ENCODE measurements at regions of chr1 and their contacts with region 1.

Region 1: GRCh38 chr1:37676281-37677243 is 15.8 kb upstream of the CDCA8 start:
- DNase-seq: peak; percentile 17
- H3K4me3 ChIP-seq: no peak overlapping the region
- H3K27ac ChIP-seq: peak overlapping the region in 1 of 2 donors; percentile 30
- H3K4me1 ChIP-seq: peaks cover 5% of the 10 kb centered on the region
- H3K27me3 ChIP-seq: peaks cover 4% of the 10 kb centered on the region
- CTCF ChIP-seq: peak in 1 of 4 experiments; percentile 3
- POLR2A ChIP-seq: no peak

Region 2: GRCh38 chr1:37602750-37603694 is 73.5 kb before region 1 on chr1:
- intact Hi-C with region 1: loop called (anchors 2 kb)
- DNase-seq: no peak
- H3K4me3 ChIP-seq: no peak overlapping the region
- H3K27ac ChIP-seq: no peak overlapping the region
- H3K4me1 ChIP-seq: no peaks in the 10 kb centered on the region
- H3K27me3 ChIP-seq: no peaks in the 10 kb centered on the region
- CTCF ChIP-seq: peak in 3 of 4 experiments; percentile 12 to 50 (median 44)
- POLR2A ChIP-seq: no peak

Region 3: DNA sequence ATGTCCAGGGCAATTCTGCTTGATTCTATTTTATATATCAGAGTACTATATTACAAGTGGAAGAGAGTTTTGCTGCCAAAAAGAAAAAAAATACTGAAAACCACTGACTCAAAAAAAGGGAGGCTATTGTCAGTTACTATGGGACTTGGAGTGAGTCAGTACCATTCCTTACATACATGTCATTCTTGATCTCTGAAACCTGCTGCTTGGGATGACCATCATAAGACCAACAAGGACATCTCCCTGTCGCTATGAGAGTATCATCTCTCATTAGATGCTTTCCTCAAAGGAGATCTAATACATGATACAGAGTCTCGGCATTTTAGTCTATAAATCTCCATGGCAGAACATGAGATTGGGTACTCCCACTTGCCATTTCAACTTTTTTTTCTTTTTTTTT is 282.1 kb after region 1 on chr1:
- intact Hi-C with region 1: no loop called
- DNase-seq: no peak
- H3K4me3 ChIP-seq: no peak overlapping the region
- H3K27ac ChIP-seq: no peak overlapping the region
- H3K4me1 ChIP-seq: no peaks in the 10 kb centered on the region
- H3K27me3 ChIP-seq: no peaks in the 10 kb centered on the region
- CTCF ChIP-seq: no peak
- POLR2A ChIP-seq: no peak